Dendritic cell treated with granulocyte-macrophage colony-stimulating factor and Interleukin-4, amounts not matched to agents 40 ng/mL and 50 ng/mL, for 4 days (primary cell): ENCODE measurements at regions of chr1 and their contacts with region 1.

Region 1: DNA sequence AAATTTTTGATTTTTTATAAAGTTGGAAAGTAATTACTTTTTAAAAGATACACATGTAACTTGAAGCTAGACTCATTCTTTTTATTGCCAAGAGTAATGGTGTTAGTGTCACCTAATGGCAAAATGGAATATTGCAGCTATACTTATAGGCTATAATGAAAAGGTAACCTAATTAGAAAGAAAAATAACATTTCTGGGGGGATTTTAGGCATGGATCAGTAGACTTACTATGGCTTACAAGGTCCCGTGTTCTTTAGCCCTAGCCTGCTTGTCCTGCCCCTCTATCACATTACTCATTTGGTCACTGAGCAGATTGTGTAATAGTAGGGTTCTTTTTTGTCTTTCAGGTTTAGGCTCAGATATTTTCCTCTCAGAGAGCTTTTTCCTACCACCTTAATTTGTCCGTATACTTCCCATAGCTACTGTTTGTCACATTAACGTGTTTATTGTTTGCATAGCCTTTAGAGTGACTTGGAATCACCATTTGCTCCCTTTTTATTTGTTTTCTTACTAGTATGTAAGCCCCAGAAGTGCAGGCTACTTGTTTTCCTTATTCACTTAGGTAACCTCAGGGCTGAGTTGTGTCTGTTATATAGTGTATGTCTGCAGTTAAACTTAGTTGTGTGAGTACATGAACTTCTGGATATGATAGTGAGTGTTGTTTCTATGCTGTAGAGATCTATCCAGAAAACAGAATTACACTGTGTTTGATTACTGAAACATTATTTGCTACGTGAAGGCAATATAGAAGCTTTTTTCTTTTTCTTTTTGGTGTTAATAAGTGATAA is 58.7 kb downstream of the RABGAP1L start:
- H3K4me3 Mint-ChIP-seq: no peak overlapping the region
- H3K27ac Mint-ChIP-seq: no peak overlapping the region
- H3K4me1 Mint-ChIP-seq: no peaks in the 10 kb centered on the region
- H3K27me3 Mint-ChIP-seq: no peaks in the 10 kb centered on the region

Region 2: GRCh38 chr1:173986951-173987350 is 231.0 kb before region 1 on chr1:
- intact Hi-C with region 1: loop called (anchors 10 kb)
- H3K4me3 Mint-ChIP-seq: no peak overlapping the region
- H3K27ac Mint-ChIP-seq: peak overlapping the region; percentile 21
- H3K4me1 Mint-ChIP-seq: no peaks in the 10 kb centered on the region
- H3K27me3 Mint-ChIP-seq: no peaks in the 10 kb centered on the region

Region 3: DNA sequence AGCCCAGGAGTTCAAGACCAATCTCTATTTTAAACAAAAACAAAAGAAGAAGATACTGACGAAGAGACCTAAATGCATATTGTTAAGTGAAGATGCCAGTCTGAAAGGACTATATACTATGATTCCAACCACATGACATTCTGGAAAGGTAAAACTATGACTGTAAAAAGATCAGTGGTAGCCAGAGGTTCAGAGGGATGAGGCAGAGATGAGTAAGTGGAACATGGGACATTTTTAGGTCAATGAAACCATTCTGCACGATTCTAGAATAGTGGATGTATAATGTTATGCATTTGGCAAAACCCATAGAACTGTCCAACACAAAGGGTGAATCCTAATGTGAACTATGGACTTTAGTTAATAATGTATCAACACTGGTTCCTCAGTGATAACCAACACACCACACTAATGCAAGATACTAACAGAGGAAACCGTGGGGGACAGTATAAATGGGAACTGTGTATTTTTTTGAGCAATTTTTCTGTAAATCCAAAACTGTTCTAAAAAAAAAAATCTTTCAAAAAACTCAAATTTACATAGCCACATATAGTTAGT is 204.0 kb before region 1 on chr1:
- intact Hi-C with region 1: loop called (anchors 10 kb)
- H3K4me3 Mint-ChIP-seq: no peak overlapping the region
- H3K27ac Mint-ChIP-seq: no peak overlapping the region
- H3K4me1 Mint-ChIP-seq: peaks cover 57% of the 10 kb centered on the region
- H3K27me3 Mint-ChIP-seq: no peaks in the 10 kb centered on the region

Region 4: GRCh38 chr1:174314433-174314832 is 96.5 kb after region 1 on chr1:
- intact Hi-C with region 1: no loop called
- H3K4me3 Mint-ChIP-seq: no peak overlapping the region
- H3K27ac Mint-ChIP-seq: peak overlapping the region; percentile 4
- H3K4me1 Mint-ChIP-seq: peaks cover 11% of the 10 kb centered on the region
- H3K27me3 Mint-ChIP-seq: no peaks in the 10 kb centered on the region

Region 5: DNA sequence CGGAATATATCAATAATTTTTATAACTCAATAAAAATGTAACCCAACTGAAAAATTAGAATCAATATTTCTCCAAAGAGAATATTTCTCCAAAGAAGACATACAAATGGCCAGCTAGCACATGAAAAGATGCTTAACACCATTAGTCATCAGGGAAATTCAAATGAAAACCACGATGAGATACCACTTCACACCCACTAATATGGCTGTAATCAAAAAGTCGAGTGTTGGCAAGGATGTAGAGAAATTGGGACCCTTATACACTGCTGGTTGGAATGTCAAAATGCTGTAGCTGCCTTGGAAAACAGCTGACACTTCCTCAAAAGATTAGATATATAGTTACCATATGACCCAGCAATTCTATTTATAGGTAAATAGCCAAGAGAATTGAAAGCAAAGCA is 362.8 kb after region 1 on chr1:
- intact Hi-C with region 1: no loop called
- H3K4me3 Mint-ChIP-seq: no peak overlapping the region
- H3K27ac Mint-ChIP-seq: no peak overlapping the region
- H3K4me1 Mint-ChIP-seq: no peaks in the 10 kb centered on the region
- H3K27me3 Mint-ChIP-seq: no peaks in the 10 kb centered on the region